ENCODE measurements at regions of chr13 and their contacts with region 1.

Region 1: GRCh38 chr13:77316430-77316829 is 10.5 kb downstream of the MYCBP2 start:
- DNase-seq: no peak
- H3K4me3 ChIP-seq: no peak overlapping the region
- H3K27ac ChIP-seq: no peak overlapping the region
- H3K4me1 ChIP-seq: peaks cover 0 to 5% (median 4%) of the 10 kb centered on the region in 4 experiments; a peak in 4 of 7 replicates
- H3K27me3 ChIP-seq: no peaks in the 10 kb centered on the region
- CTCF ChIP-seq: no peak
- EP300 ChIP-seq: no peak
- POLR2A ChIP-seq: no peak
- RAD21 ChIP-seq: no peak

Region 2: GRCh38 chr13:77274126-77274525 is 42.3 kb before region 1 on chr13:
- CTCF ChIA-PET with region 1: interaction called, 12 read pairs
- POLR2A ChIA-PET with region 1: no interaction called
- DNase-seq: no peak
- H3K4me3 ChIP-seq: no peak overlapping the region
- H3K27ac ChIP-seq: no peak overlapping the region
- H3K4me1 ChIP-seq: no peaks in the 10 kb centered on the region
- H3K27me3 ChIP-seq: no peaks in the 10 kb centered on the region
- CTCF ChIP-seq: no peak; a peak in 1 of 4 replicates
- EP300 ChIP-seq: no peak
- POLR2A ChIP-seq: no peak
- RAD21 ChIP-seq: no peak

Measured in H1 (cell line).